CD8-positive, alpha-beta T cell (primary cell): ENCODE measurements at regions of chr4 and their contacts with region 1.

Region 1: DNA sequence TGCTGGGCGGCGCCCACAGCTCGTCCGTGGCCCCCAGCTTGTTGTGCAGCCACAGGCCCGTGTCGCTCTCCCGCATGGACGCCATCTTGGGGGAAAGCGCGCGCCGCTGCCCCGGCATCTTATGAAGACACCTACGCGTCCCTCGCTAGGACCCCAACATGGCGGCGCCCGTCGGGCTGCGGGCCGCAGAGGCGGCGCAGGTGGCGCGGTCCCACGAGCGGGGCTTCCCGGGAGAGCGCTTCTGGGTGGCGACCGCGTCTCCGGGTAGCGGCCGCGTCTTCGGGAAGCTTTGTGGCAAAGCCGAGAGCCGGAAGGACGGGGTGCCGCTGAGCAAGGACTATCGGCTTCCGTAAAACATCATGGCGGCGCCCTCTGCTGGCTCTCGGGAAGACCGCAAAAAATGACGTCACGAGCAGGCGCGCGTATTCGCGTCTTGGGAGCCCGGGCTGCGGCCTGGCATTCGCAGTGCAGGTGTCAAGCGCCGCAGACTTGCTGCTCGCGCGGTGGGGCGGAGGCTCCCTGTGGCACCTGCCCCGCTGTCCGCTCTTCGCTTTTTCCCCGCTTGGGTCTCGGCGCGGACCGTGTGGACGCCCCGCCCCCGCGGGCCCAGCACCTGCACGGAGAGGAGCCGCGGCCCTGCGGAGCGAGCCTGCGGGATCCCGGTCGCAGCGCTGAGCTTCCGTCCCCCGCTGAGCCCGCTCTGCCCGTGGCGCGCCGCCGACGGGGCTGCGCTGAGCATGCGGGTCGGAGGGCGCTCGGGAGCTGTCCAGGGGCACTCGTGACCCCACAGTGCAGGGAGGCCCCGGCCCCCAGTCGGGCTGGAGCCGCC is at the start of gene NELFA:
- DNase-seq: peak; percentile 86 to 98 (median 96)
- ATAC-seq: peak; percentile 83
- H3K4me3 ChIP-seq: peak within 1 kb of the TSS; percentile 96 to 100
- H3K4me3 Mint-ChIP-seq: peak within 1 kb of the TSS; percentile 92
- H3K27ac ChIP-seq: peak within 1 kb of the TSS; percentile 98 to 99
- H3K27ac Mint-ChIP-seq: peak within 1 kb of the TSS; percentile 96
- H3K4me1 ChIP-seq: peaks cover 18% of the 10 kb centered on the region
- H3K4me1 Mint-ChIP-seq: peaks cover 32% of the 10 kb centered on the region
- H3K27me3 ChIP-seq: no peaks in the 10 kb centered on the region
- H3K27me3 Mint-ChIP-seq: no peaks in the 10 kb centered on the region
- CTCF ChIP-seq: no peak
- total RNA-seq, gene NELFA: 39.0 to 45.8 TPM

Region 2: DNA sequence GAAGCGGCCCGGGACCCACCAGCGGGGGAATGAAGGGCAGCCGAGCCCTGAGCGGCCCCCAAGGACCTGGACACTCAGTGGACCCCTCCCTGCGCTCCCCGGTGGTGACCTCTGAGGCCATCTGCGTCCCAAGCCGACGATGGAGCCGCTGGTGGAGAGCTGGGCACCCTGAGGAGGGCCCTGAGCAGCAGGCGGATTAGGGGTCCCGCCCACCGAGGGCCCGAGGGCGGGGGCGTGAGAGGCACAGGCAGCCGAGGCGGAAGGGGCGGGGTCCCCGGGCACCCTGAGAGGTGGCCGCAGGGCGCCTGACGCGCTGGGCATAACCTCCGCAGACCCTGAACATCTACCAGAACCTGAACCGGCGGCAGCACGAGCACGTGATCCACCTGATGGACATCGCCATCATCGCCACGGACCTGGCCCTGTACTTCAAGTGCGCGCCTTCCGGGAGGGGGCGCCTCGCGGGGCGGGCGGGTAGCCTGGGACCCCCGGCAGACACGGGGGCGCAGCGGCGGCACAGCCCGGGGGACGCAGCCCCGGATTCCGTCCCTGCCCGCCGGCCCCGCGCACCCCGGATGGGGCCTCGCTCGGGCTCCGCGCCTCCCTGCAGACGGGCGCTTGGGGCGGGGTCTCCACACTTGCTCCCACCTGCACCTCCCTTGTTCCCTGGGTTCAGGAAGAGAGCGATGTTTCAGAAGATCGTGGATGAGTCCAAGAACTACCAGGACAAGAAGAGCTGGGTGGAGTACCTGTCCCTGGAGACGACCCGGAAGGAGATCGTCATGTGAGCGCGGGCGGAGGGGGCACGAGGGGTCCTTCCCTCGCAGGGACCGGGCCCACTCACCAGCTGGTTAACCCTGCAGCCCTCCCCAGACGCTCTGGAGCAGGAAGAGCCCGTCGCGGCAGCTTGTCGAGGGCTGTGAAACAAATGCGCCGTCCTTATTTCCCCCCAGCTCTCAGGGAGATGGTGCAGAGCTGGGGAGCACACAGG is 1345.4 kb before region 1 on chr4:
- CTCF ChIA-PET with region 1: no interaction called
- POLR2A ChIA-PET with region 1: no interaction called
- intact Hi-C with region 1: loop called in 1 of 2 experiments (anchors 5 kb)
- DNase-seq: peak; percentile 64 to 87 (median 81)
- ATAC-seq: peak; percentile 94
- H3K4me3 ChIP-seq: peak overlapping the region; percentile 72 to 93
- H3K4me3 Mint-ChIP-seq: peak overlapping the region; percentile 83
- H3K27ac ChIP-seq: peak overlapping the region; percentile 74 to 81
- H3K27ac Mint-ChIP-seq: peak overlapping the region; percentile 92
- H3K4me1 ChIP-seq: peaks cover 19% of the 10 kb centered on the region
- H3K4me1 Mint-ChIP-seq: peaks cover 17% of the 10 kb centered on the region
- H3K27me3 ChIP-seq: no peaks in the 10 kb centered on the region
- H3K27me3 Mint-ChIP-seq: no peaks in the 10 kb centered on the region
- CTCF ChIP-seq: no peak

Region 3: GRCh38 chr4:1870578-1871443 is 138.3 kb before region 1 on chr4 and contains the start of gene NSD2:
- CTCF ChIA-PET with region 1: no interaction called
- POLR2A ChIA-PET with region 1: no interaction called
- intact Hi-C with region 1: loop called (anchors 2 to 5 kb)
- DNase-seq: peak; percentile 81 to 97 (median 88)
- ATAC-seq: peak; percentile 64
- H3K4me3 ChIP-seq: peak within 1 kb of the TSS; percentile 66 to 98
- H3K4me3 Mint-ChIP-seq: peak within 1 kb of the TSS; percentile 83
- H3K27ac ChIP-seq: peak within 1 kb of the TSS; percentile 81 to 98
- H3K27ac Mint-ChIP-seq: peak within 1 kb of the TSS; percentile 89
- H3K4me1 ChIP-seq: peaks cover 21% of the 10 kb centered on the region
- H3K4me1 Mint-ChIP-seq: peaks cover 31% of the 10 kb centered on the region
- H3K27me3 ChIP-seq: no peaks in the 10 kb centered on the region
- H3K27me3 Mint-ChIP-seq: no peaks in the 10 kb centered on the region
- CTCF ChIP-seq: no peak
- total RNA-seq, gene NSD2: 27.3 to 32.5 TPM

Region 4: GRCh38 chr4:2041234-2042130 is 32.4 kb after region 1 on chr4:
- CTCF ChIA-PET with region 1: interaction called, 4 read pairs
- POLR2A ChIA-PET with region 1: interaction called, 4 read pairs
- intact Hi-C with region 1: loop called (anchors 1 kb)
- DNase-seq: peak; percentile 51 to 88 (median 81)
- ATAC-seq: peak; percentile 62
- H3K4me3 ChIP-seq: peak overlapping the region; percentile 72 to 80
- H3K4me3 Mint-ChIP-seq: peak overlapping the region; percentile 75
- H3K27ac ChIP-seq: no peak overlapping the region
- H3K27ac Mint-ChIP-seq: no peak overlapping the region
- H3K4me1 ChIP-seq: peaks cover 12% of the 10 kb centered on the region
- H3K4me1 Mint-ChIP-seq: peaks cover 2% of the 10 kb centered on the region
- H3K27me3 ChIP-seq: peaks cover 5 to 21% of the 10 kb centered on the region in 2 experiments
- H3K27me3 Mint-ChIP-seq: peaks cover 17% of the 10 kb centered on the region
- CTCF ChIP-seq: no peak

Region 5: DNA sequence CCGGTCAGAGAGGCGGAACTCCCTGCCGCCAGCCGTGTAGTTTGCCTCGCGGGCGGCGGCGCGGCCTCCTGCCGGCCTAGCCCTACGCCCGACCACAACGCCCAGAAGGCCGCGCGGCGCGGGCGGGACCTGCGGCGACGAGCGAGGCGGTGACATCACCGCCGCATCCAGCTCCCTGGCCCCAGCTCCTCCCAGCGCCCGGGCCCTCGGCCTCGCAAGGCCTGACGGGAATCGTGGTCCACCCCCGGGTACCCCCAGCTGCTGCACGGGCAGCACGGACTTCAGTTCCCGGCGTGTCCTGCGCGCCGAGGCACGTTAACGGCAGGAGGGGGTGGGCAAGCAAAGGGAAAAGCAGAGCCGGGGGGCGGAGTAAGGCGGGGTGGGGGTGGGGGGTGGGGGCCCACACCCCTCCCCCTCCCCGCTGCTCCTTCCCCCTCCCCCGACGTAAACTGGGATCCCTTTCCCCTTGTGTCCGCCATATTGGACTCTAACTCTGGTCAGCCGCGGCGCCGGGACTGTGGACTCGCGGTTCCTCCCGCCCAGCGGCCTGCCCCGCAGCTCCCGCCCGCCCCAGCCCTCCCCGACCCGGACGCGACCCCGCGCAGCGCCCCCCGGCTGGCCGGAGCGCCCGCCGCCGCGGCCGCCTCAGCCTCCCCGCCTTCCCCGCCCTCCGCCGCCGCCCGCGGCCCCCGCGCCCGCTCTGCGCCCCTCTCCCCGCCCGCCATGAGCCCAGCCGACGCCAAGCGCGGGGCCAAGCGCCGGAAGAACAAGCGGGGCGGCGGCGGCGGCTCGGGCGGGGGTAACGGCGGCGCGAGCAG is 527.3 kb after region 1 on chr4 and contains the start of gene FAM193A:
- CTCF ChIA-PET with region 1: no interaction called
- POLR2A ChIA-PET with region 1: no interaction called
- intact Hi-C with region 1: loop called in 1 of 2 experiments (anchors 2 kb)
- DNase-seq: peak; percentile 97 to 100 (median 99)
- ATAC-seq: peak; percentile 94
- H3K4me3 ChIP-seq: peak within 1 kb of the TSS; percentile 64 to 67
- H3K4me3 Mint-ChIP-seq: peak within 1 kb of the TSS; percentile 90
- H3K27ac ChIP-seq: peak within 1 kb of the TSS; percentile 71 to 76
- H3K27ac Mint-ChIP-seq: peak within 1 kb of the TSS; percentile 92
- H3K4me1 ChIP-seq: peaks cover 26% of the 10 kb centered on the region
- H3K4me1 Mint-ChIP-seq: peaks cover 29% of the 10 kb centered on the region
- H3K27me3 ChIP-seq: no peaks in the 10 kb centered on the region
- H3K27me3 Mint-ChIP-seq: no peaks in the 10 kb centered on the region
- CTCF ChIP-seq: no peak
- total RNA-seq, gene FAM193A: 29.0 to 30.2 TPM